Mammary epithelial cell (primary cell): ENCODE measurements at regions of chr15 and their contacts with region 1.

Region 1: GRCh38 chr15:68586274-68586961 is 7.6 kb downstream of the CORO2B start:
- DNase-seq: peak; percentile 87
- H3K4me3 ChIP-seq: no peak overlapping the region
- H3K27ac ChIP-seq: no peak overlapping the region
- H3K4me1 ChIP-seq: peaks cover 28% of the 10 kb centered on the region
- H3K27me3 ChIP-seq: no peaks in the 10 kb centered on the region
- CTCF ChIP-seq: no peak

Region 2: GRCh38 chr15:68526269-68526668 is 60.1 kb before region 1 on chr15:
- CTCF ChIA-PET with region 1: no interaction called
- dilution Hi-C with region 1: loop called (anchors 5 kb)
- in situ Hi-C with region 1: no loop called
- intact Hi-C with region 1: no loop called
- DNase-seq: peak; percentile 63
- H3K4me3 ChIP-seq: no peak overlapping the region
- H3K27ac ChIP-seq: no peak overlapping the region
- H3K4me1 ChIP-seq: peaks cover 14% of the 10 kb centered on the region
- H3K27me3 ChIP-seq: no peaks in the 10 kb centered on the region
- CTCF ChIP-seq: no peak

Region 3: GRCh38 chr15:68644077-68644904 is 57.9 kb after region 1 on chr15:
- CTCF ChIA-PET with region 1: no interaction called
- dilution Hi-C with region 1: no loop called
- in situ Hi-C with region 1: loop called in 1 of 2 experiments (anchors 10 kb)
- intact Hi-C with region 1: loop called (anchors 1 kb)
- DNase-seq: peak; percentile 62
- H3K4me3 ChIP-seq: no peak overlapping the region
- H3K27ac ChIP-seq: no peak overlapping the region
- H3K4me1 ChIP-seq: peaks cover 48% of the 10 kb centered on the region
- H3K27me3 ChIP-seq: no peaks in the 10 kb centered on the region
- CTCF ChIP-seq: peak in 1 of 2 donors; percentile 8

Region 4: DNA sequence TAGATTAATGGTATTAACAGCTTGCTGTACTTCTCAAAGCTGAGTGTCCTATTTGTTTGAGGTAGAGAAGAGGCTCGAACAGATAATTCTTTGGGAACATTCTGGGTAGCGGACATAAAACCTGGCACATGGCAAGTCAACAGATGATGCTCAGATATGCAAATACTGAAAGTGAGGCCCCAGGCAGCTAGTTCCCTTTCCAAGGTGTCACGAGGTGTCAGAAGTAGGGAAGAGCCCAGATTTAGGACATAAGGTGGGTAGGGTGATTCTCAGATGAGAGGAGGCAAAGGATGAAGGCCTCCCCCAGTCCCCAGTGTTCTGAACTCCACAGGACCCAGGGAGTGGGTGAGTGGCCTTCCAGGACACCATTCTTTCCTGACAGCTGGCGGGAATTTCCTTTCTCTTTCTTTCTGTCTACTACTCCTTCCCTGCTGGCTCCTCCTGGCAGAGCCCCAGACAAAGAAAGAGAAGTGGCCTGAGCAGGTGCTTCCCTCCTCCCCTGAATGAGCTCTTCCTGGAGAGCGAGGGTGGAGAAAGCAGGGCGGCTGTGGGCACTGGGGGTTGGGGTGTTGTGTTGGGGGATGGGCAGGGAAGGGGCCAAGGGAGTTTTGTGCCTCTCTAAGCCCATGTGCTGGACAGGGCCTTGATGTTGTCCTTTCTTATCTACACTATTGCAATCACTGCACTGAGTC is 79.8 kb after region 1 on chr15:
- CTCF ChIA-PET with region 1: no interaction called
- dilution Hi-C with region 1: loop called (anchors 5 kb)
- in situ Hi-C with region 1: no loop called
- intact Hi-C with region 1: no loop called
- DNase-seq: no peak
- H3K4me3 ChIP-seq: no peak overlapping the region
- H3K27ac ChIP-seq: no peak overlapping the region
- H3K4me1 ChIP-seq: no peaks in the 10 kb centered on the region
- H3K27me3 ChIP-seq: no peaks in the 10 kb centered on the region
- CTCF ChIP-seq: no peak

Region 5: DNA sequence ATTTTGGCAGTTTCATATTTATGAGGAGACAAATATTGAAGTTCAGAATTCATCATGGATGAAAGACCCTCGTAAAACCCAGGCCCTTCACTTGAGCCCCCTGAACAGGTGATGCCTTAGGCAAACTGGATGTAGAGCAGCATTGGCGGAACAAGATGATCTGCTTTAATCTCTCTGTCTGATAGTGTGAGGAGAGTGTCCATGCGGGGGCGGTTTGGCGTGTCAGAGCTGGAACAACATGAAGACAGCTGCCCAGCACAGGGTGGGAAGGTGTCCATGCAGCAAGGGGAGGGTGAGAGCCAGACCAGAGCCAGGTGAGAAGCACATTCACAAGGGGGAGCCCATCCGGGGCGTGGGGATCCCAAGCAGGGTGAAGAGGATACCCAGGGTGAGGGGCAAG is 266.0 kb after region 1 on chr15:
- CTCF ChIA-PET with region 1: no interaction called
- dilution Hi-C with region 1: no loop called
- in situ Hi-C with region 1: no loop called
- intact Hi-C with region 1: no loop called
- DNase-seq: no peak
- H3K4me3 ChIP-seq: no peak overlapping the region
- H3K27ac ChIP-seq: no peak overlapping the region
- H3K4me1 ChIP-seq: no peaks in the 10 kb centered on the region
- H3K27me3 ChIP-seq: peaks cover 4% of the 10 kb centered on the region
- CTCF ChIP-seq: no peak